ENCODE measurements at regions of chr6 and their contacts with region 1.

Region 1: DNA sequence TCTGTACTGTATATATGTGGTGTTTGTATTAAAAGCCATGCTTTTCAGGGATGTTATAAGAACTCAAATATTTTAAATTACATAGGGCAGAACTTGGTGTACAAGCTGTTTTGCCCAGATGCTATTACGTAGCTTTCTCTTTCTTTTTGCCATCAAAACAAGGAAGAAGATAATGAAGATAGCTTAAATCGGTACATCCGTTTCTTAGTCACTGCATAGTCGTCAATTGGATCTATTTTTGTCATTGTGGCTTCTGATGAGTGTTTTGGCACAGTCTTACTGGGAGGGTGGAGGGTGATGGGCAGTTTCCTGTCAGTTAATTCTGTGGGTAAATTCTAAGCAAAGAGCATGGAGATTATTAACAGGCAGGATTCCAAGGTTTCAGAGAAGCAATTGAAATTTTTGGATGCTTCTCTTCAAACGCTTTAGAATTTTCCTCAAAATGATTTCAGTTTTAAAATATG is 649.1 kb upstream of the GJE1 start:
- DNase-seq: peak; percentile 51
- H3K4me3 Mint-ChIP-seq: peak overlapping the region; percentile 87
- H3K27ac Mint-ChIP-seq: peak overlapping the region; percentile 98
- H3K4me1 Mint-ChIP-seq: peaks cover 47% of the 10 kb centered on the region
- H3K27me3 Mint-ChIP-seq: no peaks in the 10 kb centered on the region

Region 2: GRCh38 chr6:141326426-141326825 is 157.2 kb before region 1 on chr6:
- intact Hi-C with region 1: loop called (anchors 1 kb)
- DNase-seq: no peak
- H3K4me3 Mint-ChIP-seq: no peak overlapping the region
- H3K27ac Mint-ChIP-seq: no peak overlapping the region
- H3K4me1 Mint-ChIP-seq: peaks cover 11% of the 10 kb centered on the region
- H3K27me3 Mint-ChIP-seq: no peaks in the 10 kb centered on the region

Region 3: DNA sequence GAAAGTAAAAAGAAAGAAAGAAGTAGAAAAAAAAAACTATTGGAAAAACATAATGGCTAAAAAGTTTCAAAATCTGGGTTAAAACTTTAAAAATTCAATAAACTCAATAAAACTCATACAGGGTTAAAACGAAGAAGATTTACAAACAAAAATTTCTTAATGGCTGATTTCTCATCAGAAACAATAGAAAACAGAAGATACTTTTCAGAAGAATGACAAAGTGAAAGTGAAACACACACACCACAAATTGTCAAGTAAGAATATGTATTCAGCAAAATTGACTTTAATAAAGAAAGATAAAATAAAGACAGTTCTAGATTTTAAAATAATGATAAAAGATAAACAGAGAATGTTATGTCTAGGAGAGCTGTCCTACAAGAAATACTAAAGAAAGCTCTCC is 30.2 kb after region 1 on chr6:
- intact Hi-C with region 1: loop called (anchors 2 kb)
- DNase-seq: no peak
- H3K4me3 Mint-ChIP-seq: no peak overlapping the region
- H3K27ac Mint-ChIP-seq: no peak overlapping the region
- H3K4me1 Mint-ChIP-seq: peaks cover 9% of the 10 kb centered on the region
- H3K27me3 Mint-ChIP-seq: no peaks in the 10 kb centered on the region

Measured in activated T-helper 1 cell treated with anti-CD3 and anti-CD28 coated beads, Interleukin-12 subunit alpha, Interleukin-12 subunit beta, Interleukin-2, Interleukin-4 antibody, amounts not matched to agents 30 ng/mL and 10 ng/mL and 1 ng/mL, durations not matched to agents 14 hours and 24 hours and 36 hours (primary cell).